CD14-positive monocyte (primary cell): ENCODE measurements at regions of chr10 and their contacts with region 1.

Region 1: DNA sequence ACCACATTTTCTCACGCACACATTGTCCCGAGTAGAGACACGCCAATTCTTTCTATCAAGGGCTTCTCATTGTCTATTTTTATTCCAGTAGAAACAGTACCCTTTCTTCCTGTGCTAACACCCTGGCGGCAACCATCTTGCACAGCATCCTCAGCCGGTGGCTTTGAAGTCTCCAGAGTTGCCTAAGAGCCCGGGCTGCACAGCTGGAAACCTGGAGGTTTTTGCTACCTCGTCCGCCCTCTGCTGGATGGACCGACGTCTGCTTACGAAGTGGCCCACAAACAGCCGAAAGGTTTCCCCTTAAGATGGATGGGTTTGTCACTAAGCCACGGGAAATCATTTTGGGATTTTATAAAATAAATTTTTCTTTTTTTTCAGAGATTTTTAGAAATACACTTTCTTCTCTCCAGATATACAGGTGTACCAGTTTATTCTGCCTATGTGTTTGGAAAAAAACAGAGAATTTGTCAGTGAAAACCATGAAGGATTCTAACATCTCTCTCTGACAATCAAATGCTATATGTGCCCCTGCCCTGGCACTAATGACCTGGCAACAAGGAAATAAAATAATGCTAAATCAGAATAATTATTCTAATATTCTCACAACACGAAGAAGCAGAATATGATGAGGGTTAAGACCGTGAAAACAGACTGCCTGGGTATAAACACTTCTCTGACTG is 81.8 kb upstream of the FAM204A start:
- DNase-seq: peak; percentile 17 to 54 (median 21)
- H3K4me3 ChIP-seq: no peak overlapping the region
- H3K4me3 Mint-ChIP-seq: no peak overlapping the region
- H3K27ac ChIP-seq: no peak overlapping the region
- H3K27ac Mint-ChIP-seq: no peak overlapping the region
- H3K4me1 ChIP-seq: no peaks in the 10 kb centered on the region
- H3K4me1 Mint-ChIP-seq: no peaks in the 10 kb centered on the region
- H3K27me3 ChIP-seq: peaks cover 0 to 4% of the 10 kb centered on the region in 2 donors
- H3K27me3 Mint-ChIP-seq: peaks cover 3 to 6% (median 4%) of the 10 kb centered on the region in 3 donors
- CTCF ChIP-seq: peak; percentile 67

Region 2: GRCh38 chr10:117496616-117497028 is 927.3 kb before region 1 on chr10:
- intact Hi-C with region 1: loop called in 1 of 2 experiments (anchors 10 kb)
- DNase-seq: peak; percentile 39 to 59 (median 51)
- H3K4me3 ChIP-seq: no peak overlapping the region
- H3K4me3 Mint-ChIP-seq: no peak overlapping the region
- H3K27ac ChIP-seq: no peak overlapping the region
- H3K27ac Mint-ChIP-seq: no peak overlapping the region
- H3K4me1 ChIP-seq: no peaks in the 10 kb centered on the region
- H3K4me1 Mint-ChIP-seq: peaks cover 3% of the 10 kb centered on the region
- H3K27me3 ChIP-seq: peaks cover 5 to 26% of the 10 kb centered on the region in 2 donors
- H3K27me3 Mint-ChIP-seq: peaks cover 20 to 45% (median 35%) of the 10 kb centered on the region in 3 donors
- CTCF ChIP-seq: peak; percentile 92

Region 3: GRCh38 chr10:118057361-118057760 is 366.6 kb before region 1 on chr10:
- intact Hi-C with region 1: no loop called
- DNase-seq: no peak
- H3K4me3 ChIP-seq: no peak overlapping the region
- H3K4me3 Mint-ChIP-seq: no peak overlapping the region
- H3K27ac ChIP-seq: no peak overlapping the region
- H3K27ac Mint-ChIP-seq: no peak overlapping the region
- H3K4me1 ChIP-seq: no peaks in the 10 kb centered on the region
- H3K4me1 Mint-ChIP-seq: no peaks in the 10 kb centered on the region
- H3K27me3 ChIP-seq: peaks cover 0 to 2% of the 10 kb centered on the region in 2 donors
- H3K27me3 Mint-ChIP-seq: peaks cover 3 to 6% (median 4%) of the 10 kb centered on the region in 3 donors
- CTCF ChIP-seq: no peak

Region 4: GRCh38 chr10:118373786-118374185 is 50.2 kb before region 1 on chr10:
- intact Hi-C with region 1: no loop called
- DNase-seq: no peak
- H3K4me3 ChIP-seq: no peak overlapping the region
- H3K4me3 Mint-ChIP-seq: no peak overlapping the region
- H3K27ac ChIP-seq: no peak overlapping the region
- H3K27ac Mint-ChIP-seq: no peak overlapping the region
- H3K4me1 ChIP-seq: no peaks in the 10 kb centered on the region
- H3K4me1 Mint-ChIP-seq: no peaks in the 10 kb centered on the region
- H3K27me3 ChIP-seq: peaks cover 6 to 15% of the 10 kb centered on the region in 2 donors
- H3K27me3 Mint-ChIP-seq: peaks cover 2 to 23% (median 5%) of the 10 kb centered on the region in 3 donors
- CTCF ChIP-seq: no peak